ENCODE measurements at regions of chr5 and their contacts with region 1.

Region 1: DNA sequence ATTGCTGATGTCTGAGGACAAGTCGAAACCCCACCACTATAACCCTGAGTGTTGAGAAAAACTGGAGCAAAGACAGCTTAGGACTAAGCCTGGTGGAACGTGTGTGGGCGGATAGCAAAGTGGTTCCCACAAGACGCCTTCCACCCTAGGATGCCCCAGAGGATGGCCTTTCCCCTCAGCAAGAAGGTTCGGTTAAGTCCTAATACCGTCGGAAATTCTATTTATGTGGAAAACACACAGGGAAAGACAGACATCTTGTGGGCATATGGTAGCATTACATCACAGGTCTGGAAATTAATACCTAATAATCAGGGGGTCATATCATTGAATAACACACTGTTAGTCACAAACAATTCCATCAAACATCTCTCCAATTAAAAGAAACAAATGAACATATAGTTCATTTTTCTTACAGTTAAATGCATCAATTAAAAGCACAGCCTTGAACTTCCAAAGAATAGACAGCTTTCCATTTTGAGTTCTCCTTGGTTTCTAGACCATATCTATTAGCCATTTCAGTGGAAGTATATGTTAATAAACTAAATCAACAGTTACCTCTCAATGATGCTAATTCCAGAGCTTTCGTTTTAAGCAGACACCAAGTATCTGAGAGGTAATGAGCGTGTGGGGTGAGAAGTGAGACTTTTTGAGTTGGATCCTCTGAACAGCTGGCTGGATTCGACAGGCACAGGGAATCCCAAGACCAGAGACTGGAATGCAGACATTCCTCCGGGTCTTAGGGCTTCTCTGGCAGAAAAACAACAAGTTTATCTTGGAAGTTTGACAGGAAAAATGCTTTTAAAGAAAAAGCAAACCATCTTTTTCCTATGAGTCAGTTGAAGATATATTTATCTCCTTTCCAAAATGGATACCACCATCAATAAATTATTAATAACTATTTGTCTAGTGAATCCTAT is 2.9 kb upstream of the ICE1 start:
- DNase-seq: peak; percentile 79
- H3K27ac ChIP-seq: no peak overlapping the region
- CTCF ChIP-seq: peak; percentile 94

Region 2: GRCh38 chr5:4879693-4880303 is 539.8 kb before region 1 on chr5:
- CTCF ChIA-PET with region 1: interaction called, 17 read pairs
- POLR2A ChIA-PET with region 1: no interaction called
- DNase-seq: peak; percentile 54
- H3K27ac ChIP-seq: no peak overlapping the region
- CTCF ChIP-seq: peak; percentile 96

Region 3: DNA sequence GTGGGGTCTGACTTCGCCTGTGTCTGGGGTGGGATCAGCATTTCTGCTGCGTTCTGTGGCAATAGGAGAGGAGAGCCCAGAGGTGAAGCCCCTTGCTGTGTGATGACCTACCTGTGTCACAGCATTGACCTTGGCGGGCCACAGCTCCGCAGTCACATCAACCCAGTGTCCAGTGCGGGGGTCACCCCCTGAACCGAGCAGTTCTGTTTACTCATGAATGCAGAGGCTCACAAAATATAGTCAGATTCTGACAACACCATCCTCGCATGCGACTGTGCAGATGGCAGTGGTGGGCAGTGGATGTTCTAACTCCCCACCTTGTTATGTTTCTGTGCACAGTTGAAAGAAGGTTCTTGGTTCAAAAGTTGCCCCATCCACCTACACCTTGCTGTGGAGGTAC is 179.3 kb before region 1 on chr5:
- CTCF ChIA-PET with region 1: no interaction called
- POLR2A ChIA-PET with region 1: no interaction called
- DNase-seq: no peak
- H3K27ac ChIP-seq: no peak overlapping the region
- CTCF ChIP-seq: no peak

Region 4: DNA sequence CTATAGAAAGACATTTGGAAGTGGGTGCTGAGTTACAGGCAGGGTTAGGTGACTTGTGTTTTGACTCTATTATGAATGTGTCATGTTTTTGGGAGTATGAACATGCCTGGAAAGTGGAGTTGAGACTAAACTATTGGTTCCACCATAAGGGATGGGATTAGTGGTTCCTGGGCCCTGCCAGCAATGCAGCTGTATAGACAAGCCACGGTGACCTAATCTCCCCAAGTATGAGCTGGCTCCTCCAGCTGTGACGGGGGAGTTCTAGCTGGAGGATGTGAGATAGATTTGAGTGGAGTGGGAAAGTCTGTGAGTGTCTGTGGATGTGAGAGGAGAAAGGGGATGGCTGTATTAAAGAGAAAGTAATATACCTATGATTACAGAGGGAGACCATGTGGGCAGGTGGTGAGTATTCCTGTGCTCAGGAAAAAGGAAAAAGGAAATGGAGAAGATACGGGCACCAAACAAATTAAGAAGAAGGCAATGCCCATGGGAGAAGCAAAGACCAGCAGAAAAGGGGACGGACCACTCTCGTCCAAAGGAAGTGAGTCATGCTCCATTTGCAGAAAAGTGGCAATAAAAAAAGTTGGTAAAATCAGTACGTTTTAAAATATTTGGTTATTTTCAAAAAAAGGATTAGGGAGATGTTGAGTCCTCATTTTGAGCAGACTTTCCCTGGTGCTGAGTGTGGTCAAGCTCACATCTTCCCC is 45.4 kb before region 1 on chr5:
- CTCF ChIA-PET with region 1: no interaction called
- POLR2A ChIA-PET with region 1: no interaction called
- DNase-seq: no peak
- H3K27ac ChIP-seq: peak overlapping the region; percentile 59
- CTCF ChIP-seq: no peak